Activated naive CD4-positive, alpha-beta T cell treated with anti-CD3 and anti-CD28 coated beads for 36 hours (primary cell): ENCODE measurements at regions of chr15 and their contacts with region 1.

Region 1: DNA sequence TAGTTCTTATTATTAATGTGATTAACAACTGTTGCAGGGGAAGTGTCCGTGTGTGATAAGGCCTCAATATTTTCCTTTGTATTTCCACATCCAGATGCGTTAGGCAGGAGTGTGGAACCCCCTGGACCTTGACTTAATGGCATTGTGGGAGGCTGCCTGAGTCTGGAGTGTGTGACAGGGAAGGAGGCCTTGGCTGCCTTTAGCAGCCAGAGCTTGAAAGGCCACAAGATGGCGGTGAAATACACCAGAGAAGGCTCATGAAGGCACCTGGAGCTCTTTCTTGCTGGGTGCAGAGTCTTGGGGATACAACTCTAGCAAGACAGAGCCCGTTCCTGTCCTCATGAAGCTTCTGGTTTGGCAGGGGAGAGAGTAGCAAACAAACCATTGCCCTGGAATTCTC is 36.9 kb downstream of the POLR2M start:
- DNase-seq: peak; percentile 11
- H3K4me3 Mint-ChIP-seq: no peak overlapping the region
- H3K27ac Mint-ChIP-seq: no peak overlapping the region
- H3K4me1 Mint-ChIP-seq: peaks cover 5% of the 10 kb centered on the region
- H3K27me3 Mint-ChIP-seq: no peaks in the 10 kb centered on the region

Region 2: GRCh38 chr15:57792724-57793449 is 49.5 kb after region 1 on chr15:
- CTCF ChIA-PET with region 1: no interaction called
- intact Hi-C with region 1: no loop called
- DNase-seq: no peak
- H3K4me3 Mint-ChIP-seq: no peak overlapping the region
- H3K27ac Mint-ChIP-seq: no peak overlapping the region
- H3K4me1 Mint-ChIP-seq: no peaks in the 10 kb centered on the region
- H3K27me3 Mint-ChIP-seq: peaks cover 8% of the 10 kb centered on the region

Region 3: GRCh38 chr15:58010983-58011382 is 267.6 kb after region 1 on chr15:
- CTCF ChIA-PET with region 1: no interaction called
- intact Hi-C with region 1: loop called (anchors 5 kb)
- DNase-seq: no peak
- H3K4me3 Mint-ChIP-seq: no peak overlapping the region
- H3K27ac Mint-ChIP-seq: no peak overlapping the region
- H3K4me1 Mint-ChIP-seq: no peaks in the 10 kb centered on the region
- H3K27me3 Mint-ChIP-seq: peaks cover 16% of the 10 kb centered on the region